A673 (cell line): ENCODE measurements at regions of chr22 and their contacts with region 1.

Region 1: DNA sequence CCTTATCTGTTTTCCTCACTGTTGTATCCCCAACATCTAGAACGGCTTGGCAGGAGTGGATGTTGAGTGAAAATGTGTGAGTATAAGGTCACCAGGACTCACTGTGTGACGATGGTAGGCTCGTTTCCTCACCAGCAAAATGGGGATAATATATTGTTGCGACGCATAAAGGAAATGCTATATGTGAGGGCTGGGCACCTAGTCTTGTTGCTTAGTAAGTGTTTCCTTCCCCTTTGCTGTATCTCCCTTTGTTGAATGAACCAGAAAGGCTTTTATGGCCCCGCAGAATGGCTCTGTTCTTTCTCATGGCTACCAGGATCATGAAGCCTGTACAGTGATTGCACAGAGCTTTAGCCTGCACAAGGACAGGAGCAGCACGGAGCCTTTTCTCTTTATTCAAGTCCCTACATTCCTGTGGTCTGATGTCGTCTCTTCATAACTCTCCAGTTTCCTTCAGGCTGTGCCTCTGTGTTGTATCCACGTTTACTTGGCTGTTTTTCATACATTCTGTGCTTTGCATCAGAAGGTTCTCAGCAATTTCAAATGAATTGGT is 5.4 kb downstream of the TNRC6B start:
- DNase-seq: peak; percentile 81
- H3K4me3 ChIP-seq: peak overlapping the region; percentile 9
- H3K27ac ChIP-seq: peak overlapping the region; percentile 73
- H3K4me1 ChIP-seq: peaks cover 28% of the 10 kb centered on the region
- H3K27me3 ChIP-seq: no peaks in the 10 kb centered on the region
- CTCF ChIP-seq: no peak

Region 2: GRCh38 chr22:40084246-40084645 is 98.9 kb before region 1 on chr22:
- CTCF ChIA-PET with region 1: no interaction called
- POLR2A ChIA-PET with region 1: no interaction called
- intact Hi-C with region 1: no loop called
- DNase-seq: no peak
- H3K4me3 ChIP-seq: no peak overlapping the region
- H3K27ac ChIP-seq: no peak overlapping the region
- H3K4me1 ChIP-seq: peaks cover 5% of the 10 kb centered on the region
- H3K27me3 ChIP-seq: peaks cover 8% of the 10 kb centered on the region
- CTCF ChIP-seq: no peak

Region 3: GRCh38 chr22:40156001-40156516 is 27.0 kb before region 1 on chr22:
- CTCF ChIA-PET with region 1: no interaction called
- POLR2A ChIA-PET with region 1: interaction called, 14 read pairs
- intact Hi-C with region 1: no loop called
- DNase-seq: no peak
- H3K4me3 ChIP-seq: no peak overlapping the region
- H3K27ac ChIP-seq: no peak overlapping the region
- H3K4me1 ChIP-seq: peaks cover 4% of the 10 kb centered on the region
- H3K27me3 ChIP-seq: no peaks in the 10 kb centered on the region
- CTCF ChIP-seq: peak; percentile 38; the same call in 1 of the 2 replicates